Psoas muscle (tissue), 8 donors: ENCODE measurements at regions of chr11 and their contacts with region 1.

Region 1: GRCh38 chr11:10933455-10934292 is 75.8 kb upstream of the ZBED5 start:
- DNase-seq: peak; percentile 89 to 94
- ATAC-seq: peak; percentile 87 to 91 (median 90)
- H3K4me3 ChIP-seq: peak overlapping the region; percentile 63
- H3K27ac ChIP-seq: peak overlapping the region; percentile 65
- H3K4me1 ChIP-seq: no peaks in the 10 kb centered on the region
- H3K27me3 ChIP-seq: no peaks in the 10 kb centered on the region
- CTCF ChIP-seq: peak; percentile 99

Region 2: DNA sequence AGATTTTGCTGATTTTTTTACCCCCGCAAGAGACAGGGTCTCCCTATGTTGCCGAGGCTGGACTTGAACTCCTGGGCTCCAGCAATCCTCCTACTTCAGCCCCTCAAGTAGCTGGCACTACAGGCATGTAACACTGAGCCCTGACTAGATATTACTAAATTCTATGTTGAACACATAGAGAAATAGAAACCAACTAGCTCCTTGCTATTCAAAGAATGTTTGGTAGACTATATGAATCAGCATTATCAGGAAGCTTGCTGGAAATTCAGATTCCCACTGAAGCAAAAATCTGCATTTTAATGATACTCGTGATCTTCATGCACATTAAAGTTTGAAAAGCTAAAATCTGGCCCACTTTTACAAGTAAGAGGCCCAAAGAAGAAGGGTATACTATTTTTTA is 1631.2 kb before region 1 on chr11:
- intact Hi-C with region 1: no loop called
- DNase-seq: no peak
- ATAC-seq: no peak
- H3K4me3 ChIP-seq: no peak overlapping the region
- H3K27ac ChIP-seq: no peak overlapping the region
- H3K4me1 ChIP-seq: no peaks in the 10 kb centered on the region
- H3K27me3 ChIP-seq: no peaks in the 10 kb centered on the region
- CTCF ChIP-seq: no peak

Region 3: DNA sequence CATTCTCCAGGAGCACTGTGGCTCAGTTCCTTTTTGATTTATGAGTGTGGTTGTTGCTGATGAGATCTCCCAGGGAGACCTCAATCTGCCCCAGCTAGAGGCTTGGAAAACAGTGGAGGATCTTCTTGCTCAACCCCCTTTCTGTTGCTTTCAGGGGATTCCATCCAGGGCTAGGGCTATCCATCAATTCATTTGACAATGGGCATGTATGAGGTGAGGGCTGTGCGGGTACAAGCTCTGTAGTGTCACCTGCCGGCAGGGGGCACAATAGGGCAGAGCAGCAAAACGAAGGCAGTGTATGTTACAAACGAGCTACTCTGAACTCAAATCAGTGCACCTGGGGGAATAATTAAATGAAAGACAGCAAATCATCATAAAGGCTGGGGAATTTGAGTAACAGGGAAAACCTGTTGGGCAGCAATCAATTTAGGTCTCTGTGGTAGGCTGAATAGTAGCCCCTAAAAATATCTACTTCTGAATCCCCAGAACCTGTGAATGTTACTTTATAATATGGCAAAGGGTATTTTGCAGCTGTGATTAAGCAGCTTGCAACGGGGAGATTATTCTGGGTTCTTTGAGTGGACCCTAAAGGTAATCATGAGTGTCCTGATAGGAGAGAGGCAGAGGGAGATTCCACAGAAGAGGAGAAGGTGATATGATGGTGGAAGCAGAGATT is 94.5 kb after region 1 on chr11:
- intact Hi-C with region 1: loop called in 1 of 2 experiments (anchors 2 kb)
- DNase-seq: peak; percentile 67 to 83
- ATAC-seq: peak; percentile 75 to 95 (median 86)
- H3K4me3 ChIP-seq: no peak overlapping the region
- H3K27ac ChIP-seq: no peak overlapping the region
- H3K4me1 ChIP-seq: no peaks in the 10 kb centered on the region
- H3K27me3 ChIP-seq: no peaks in the 10 kb centered on the region
- CTCF ChIP-seq: peak; percentile 82

Region 4: GRCh38 chr11:11265994-11266606 is 332.4 kb after region 1 on chr11:
- intact Hi-C with region 1: loop called in 1 of 2 experiments (anchors 10 kb)
- DNase-seq: peak; percentile 40 to 76
- ATAC-seq: peak; percentile 69 to 92 (median 84)
- H3K4me3 ChIP-seq: no peak overlapping the region
- H3K27ac ChIP-seq: no peak overlapping the region
- H3K4me1 ChIP-seq: no peaks in the 10 kb centered on the region
- H3K27me3 ChIP-seq: no peaks in the 10 kb centered on the region
- CTCF ChIP-seq: peak; percentile 82